Panc1 (cell line): ENCODE measurements at regions of chr5 and their contacts with region 1.

Region 1: GRCh38 chr5:134083517-134083916 is 31.0 kb upstream of the TCF7 start:
- DNase-seq: no peak
- ATAC-seq: peak; percentile 67
- H3K4me3 ChIP-seq: no peak overlapping the region
- H3K27ac ChIP-seq: no peak overlapping the region
- H3K4me1 ChIP-seq: no peaks in the 10 kb centered on the region
- H3K27me3 ChIP-seq: no peaks in the 10 kb centered on the region
- CTCF ChIP-seq: no peak

Region 2: GRCh38 chr5:133944263-133945185 is 139.0 kb before region 1 on chr5:
- CTCF ChIA-PET with region 1: no interaction called
- POLR2A ChIA-PET with region 1: no interaction called
- in situ Hi-C with region 1: no loop called
- intact Hi-C with region 1: no loop called
- DNase-seq: peak; percentile 17
- ATAC-seq: peak; percentile 79
- H3K4me3 ChIP-seq: no peak overlapping the region
- H3K27ac ChIP-seq: no peak overlapping the region
- H3K4me1 ChIP-seq: no peaks in the 10 kb centered on the region
- H3K27me3 ChIP-seq: no peaks in the 10 kb centered on the region
- CTCF ChIP-seq: peak; percentile 77

Region 3: GRCh38 chr5:134007581-134008256 is 75.8 kb before region 1 on chr5:
- CTCF ChIA-PET with region 1: no interaction called
- POLR2A ChIA-PET with region 1: no interaction called
- in situ Hi-C with region 1: no loop called
- intact Hi-C with region 1: no loop called
- DNase-seq: no peak
- ATAC-seq: no peak
- H3K4me3 ChIP-seq: no peak overlapping the region
- H3K27ac ChIP-seq: peak overlapping the region; percentile 75; the same call in 1 of the 2 replicates
- H3K4me1 ChIP-seq: peaks cover 24% of the 10 kb centered on the region
- H3K27me3 ChIP-seq: no peaks in the 10 kb centered on the region; the same call in 1 of the 2 replicates
- CTCF ChIP-seq: no peak

Region 4: GRCh38 chr5:134018154-134018985 is 65.1 kb before region 1 on chr5:
- CTCF ChIA-PET with region 1: no interaction called
- POLR2A ChIA-PET with region 1: no interaction called
- in situ Hi-C with region 1: no loop called
- intact Hi-C with region 1: no loop called
- DNase-seq: no peak
- ATAC-seq: peak; percentile 88
- H3K4me3 ChIP-seq: no peak overlapping the region
- H3K27ac ChIP-seq: peak overlapping the region; percentile 79
- H3K4me1 ChIP-seq: peaks cover 37% of the 10 kb centered on the region
- H3K27me3 ChIP-seq: no peaks in the 10 kb centered on the region
- CTCF ChIP-seq: no peak

Region 5: DNA sequence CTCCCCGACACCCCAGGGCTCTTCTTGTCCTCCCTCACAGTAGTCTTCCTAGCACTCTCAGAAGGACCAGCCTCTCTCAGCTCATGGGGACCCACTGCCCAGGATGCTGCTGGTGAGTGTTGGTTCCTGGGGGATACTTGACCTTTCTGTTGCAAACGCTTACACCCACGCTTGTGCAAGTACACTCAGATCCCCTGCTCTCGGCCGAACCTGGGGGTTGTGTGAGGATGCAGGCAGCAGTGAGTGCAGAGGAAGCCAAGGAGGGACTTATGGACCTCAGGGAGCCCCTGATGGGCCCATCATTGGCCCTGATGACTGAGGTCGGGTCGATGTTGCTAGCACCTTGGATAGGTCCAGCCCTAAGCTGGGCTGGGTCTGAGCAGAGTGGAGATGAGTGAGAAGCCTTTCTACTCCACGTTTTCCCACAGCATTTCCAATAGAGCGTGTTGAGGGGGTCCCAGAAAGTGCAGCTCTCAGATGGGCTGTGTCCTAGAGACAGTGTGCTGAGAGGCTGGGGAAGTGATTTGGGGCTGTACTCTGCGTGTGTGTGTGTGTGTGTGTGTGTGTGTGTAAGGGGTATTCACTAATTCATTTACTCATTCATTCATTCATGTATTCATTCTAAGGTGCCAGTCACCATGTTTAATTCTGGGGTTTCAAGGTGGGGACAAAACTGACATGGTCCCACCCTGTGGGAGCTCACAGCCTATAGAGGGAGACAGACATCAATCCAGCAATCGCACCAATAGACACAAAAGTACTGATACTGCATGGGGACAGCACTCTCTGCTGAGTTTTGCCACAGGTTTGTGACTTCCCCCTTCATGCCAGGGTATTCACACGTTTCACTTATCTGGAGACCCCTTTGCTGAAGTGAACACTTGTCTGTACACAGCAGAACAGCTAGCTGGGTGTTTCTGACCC is 975.7 kb after region 1 on chr5:
- CTCF ChIA-PET with region 1: no interaction called
- POLR2A ChIA-PET with region 1: interaction called, 12 read pairs
- in situ Hi-C with region 1: no loop called
- intact Hi-C with region 1: no loop called
- DNase-seq: no peak
- ATAC-seq: no peak
- H3K4me3 ChIP-seq: no peak overlapping the region
- H3K27ac ChIP-seq: no peak overlapping the region
- H3K4me1 ChIP-seq: no peaks in the 10 kb centered on the region
- H3K27me3 ChIP-seq: no peaks in the 10 kb centered on the region
- CTCF ChIP-seq: no peak

Region 6: DNA sequence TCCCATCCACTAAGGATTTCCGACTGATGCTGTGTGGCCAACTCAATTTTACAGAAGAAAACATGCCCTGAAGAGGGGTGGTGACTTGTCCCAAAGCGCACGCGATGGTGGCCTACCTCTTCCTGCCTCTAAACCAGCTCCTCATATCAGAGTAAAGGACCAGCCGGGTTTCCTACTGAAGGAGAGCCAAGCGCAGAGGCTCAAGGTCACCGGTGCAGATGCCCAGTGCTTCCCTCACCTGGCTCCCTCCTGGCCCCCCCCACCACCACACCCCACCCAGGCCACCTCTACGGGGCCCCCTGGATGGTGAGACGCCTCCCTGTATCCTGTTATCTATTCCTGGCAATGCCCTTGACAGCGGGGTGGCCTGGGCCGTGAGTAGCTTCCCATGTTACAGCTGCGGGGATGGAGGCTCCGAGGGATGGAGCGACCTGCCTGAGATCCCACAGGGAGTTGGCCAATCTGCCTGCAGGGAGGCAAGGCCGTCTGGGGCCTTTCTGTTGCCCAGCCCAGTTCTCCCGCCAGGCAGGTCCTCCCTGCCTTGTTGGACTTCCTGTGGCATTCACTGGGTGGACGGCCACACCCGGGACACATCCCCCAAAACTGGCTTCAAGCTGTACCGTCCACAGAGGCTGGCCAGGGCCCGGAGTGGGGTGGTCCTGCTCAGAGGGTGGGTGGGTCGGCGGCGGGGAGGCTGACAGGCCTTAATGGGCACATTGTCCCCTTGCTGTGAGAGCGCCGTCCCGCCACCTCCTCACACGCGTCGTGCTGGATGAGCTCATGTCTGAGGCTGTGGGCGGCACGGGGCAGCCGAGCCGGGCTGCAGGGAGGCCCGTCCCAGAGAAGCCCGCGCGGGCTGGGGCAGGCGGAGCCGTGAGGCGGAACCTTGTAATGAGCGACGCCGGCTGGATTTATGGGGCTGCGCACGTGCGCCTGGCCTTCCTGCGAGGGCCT is 1243.1 kb after region 1 on chr5:
- CTCF ChIA-PET with region 1: no interaction called
- POLR2A ChIA-PET with region 1: interaction called, 11 read pairs
- in situ Hi-C with region 1: no loop called
- intact Hi-C with region 1: no loop called
- DNase-seq: no peak
- ATAC-seq: no peak
- H3K4me3 ChIP-seq: no peak overlapping the region
- H3K27ac ChIP-seq: no peak overlapping the region
- H3K4me1 ChIP-seq: no peaks in the 10 kb centered on the region
- H3K27me3 ChIP-seq: no peaks in the 10 kb centered on the region; the same call in 1 of the 2 replicates
- CTCF ChIP-seq: no peak